ENCODE measurements at regions of chr4 and their contacts with region 1.

Region 1: GRCh38 chr4:185134307-185134869 is 8.7 kb upstream of the SLC25A4 start:
- DNase-seq: no peak
- ATAC-seq: peak; percentile 87
- H3K4me3 ChIP-seq: no peak overlapping the region
- H3K27ac ChIP-seq: no peak overlapping the region
- H3K4me1 ChIP-seq: no peaks in the 10 kb centered on the region
- H3K27me3 ChIP-seq: no peaks in the 10 kb centered on the region
- CTCF ChIP-seq: peak; percentile 84

Region 2: GRCh38 chr4:185039508-185040273 is 94.7 kb before region 1 on chr4:
- intact Hi-C with region 1: loop called (anchors 5 kb)
- DNase-seq: no peak
- ATAC-seq: peak; percentile 96
- H3K4me3 ChIP-seq: no peak overlapping the region
- H3K27ac ChIP-seq: no peak overlapping the region
- H3K4me1 ChIP-seq: no peaks in the 10 kb centered on the region
- H3K27me3 ChIP-seq: no peaks in the 10 kb centered on the region
- CTCF ChIP-seq: peak; percentile 78

Measured in upper lobe of right lung (tissue), 1 donor.